AG04450 (cell line): ENCODE measurements at regions of chr16 and their contacts with region 1.

Region 1: DNA sequence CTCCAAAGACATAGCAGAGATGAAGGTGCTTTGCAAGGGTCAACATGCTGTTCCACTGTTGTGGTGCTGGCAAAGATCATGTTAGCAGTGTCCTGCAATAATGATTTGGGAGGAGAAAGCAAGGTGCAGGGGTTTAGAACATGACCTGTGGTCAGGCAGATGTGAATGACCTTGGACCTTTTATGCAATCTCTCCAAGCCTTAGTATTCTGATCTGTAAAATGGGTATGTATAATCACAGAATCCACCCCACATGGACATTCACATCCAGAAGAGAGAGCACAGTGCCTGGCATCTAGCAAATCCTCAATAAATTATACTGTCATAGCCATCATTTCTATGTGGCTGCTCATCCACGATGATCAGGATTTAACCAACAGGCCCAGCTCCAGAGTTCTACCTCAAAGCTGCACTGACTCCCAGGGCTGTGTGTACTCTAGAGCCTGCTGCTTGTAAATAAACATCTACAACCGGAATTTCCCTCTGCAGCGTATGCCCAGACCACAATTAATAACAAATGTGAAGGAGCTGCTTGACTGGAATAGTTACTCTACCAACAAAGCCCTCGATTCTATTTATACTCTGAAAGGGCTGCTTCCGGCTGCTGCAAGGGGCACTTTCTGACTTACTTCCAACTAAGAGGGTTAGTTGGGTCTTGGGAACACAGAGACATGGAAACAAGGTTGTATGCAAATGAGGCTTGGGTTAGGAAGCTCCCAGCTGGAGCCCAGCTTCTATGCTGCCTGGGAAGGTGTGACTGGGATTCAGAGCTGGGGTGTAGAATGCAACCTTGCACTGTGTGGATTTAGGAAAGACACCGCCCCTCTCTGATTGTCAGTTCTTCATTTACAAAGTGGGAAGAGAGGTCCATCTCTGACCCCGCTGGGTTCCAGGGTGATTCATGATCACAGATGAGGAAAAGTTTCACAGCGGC is 265.2 kb downstream of the XYLT1 start:
- DNase-seq: peak; percentile 80
- H3K4me3 ChIP-seq: no peak overlapping the region
- H3K27ac ChIP-seq: peak overlapping the region; percentile 23
- H3K27me3 ChIP-seq: no peaks in the 10 kb centered on the region
- CTCF ChIP-seq: no peak

Region 2: GRCh38 chr16:17194190-17194780 is 11.3 kb before region 1 on chr16:
- CTCF ChIA-PET with region 1: interaction called, 17 read pairs
- POLR2A ChIA-PET with region 1: no interaction called
- DNase-seq: no peak
- H3K4me3 ChIP-seq: no peak overlapping the region
- H3K27ac ChIP-seq: no peak overlapping the region
- H3K27me3 ChIP-seq: no peaks in the 10 kb centered on the region
- CTCF ChIP-seq: peak; percentile 74